ENCODE measurements at regions of chr12 and their contacts with region 1.

Region 1: GRCh38 chr12:101424620-101425019 is 17.0 kb upstream of the ARL1 start:
- DNase-seq: no peak
- ATAC-seq: no peak
- H3K4me3 ChIP-seq: no peak overlapping the region
- H3K27ac ChIP-seq: no peak overlapping the region
- H3K4me1 ChIP-seq: no peaks in the 10 kb centered on the region
- H3K27me3 ChIP-seq: no peaks in the 10 kb centered on the region
- CTCF ChIP-seq: no peak
- POLR2A ChIP-seq: no peak
- RAD21 ChIP-seq: no peak

Region 2: DNA sequence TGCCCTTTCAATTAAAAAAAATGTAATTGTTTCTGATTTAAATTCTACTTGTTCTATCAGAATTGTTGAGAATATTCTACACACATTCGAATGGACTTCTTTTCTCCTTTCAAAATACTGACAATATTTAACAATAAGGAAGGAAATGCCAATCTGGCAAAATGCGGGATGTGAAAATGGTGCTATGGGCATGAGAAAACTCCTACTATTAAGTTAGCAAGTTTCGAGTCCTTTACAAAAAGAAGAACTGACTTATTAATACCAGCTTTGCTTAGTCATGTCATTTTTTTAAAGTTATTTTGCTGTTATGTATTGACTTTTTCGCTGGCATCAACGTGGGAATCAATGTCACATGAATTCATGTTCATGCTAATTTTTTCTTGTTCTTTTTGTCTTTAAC is 14.6 kb after region 1 on chr12:
- CTCF ChIA-PET with region 1: no interaction called
- POLR2A ChIA-PET with region 1: no interaction called
- RAD21 ChIA-PET with region 1: no interaction called
- intact Hi-C with region 1: no loop called
- DNase-seq: no peak
- ATAC-seq: no peak
- H3K4me3 ChIP-seq: no peak overlapping the region
- H3K27ac ChIP-seq: no peak overlapping the region
- H3K4me1 ChIP-seq: no peaks in the 10 kb centered on the region
- H3K27me3 ChIP-seq: no peaks in the 10 kb centered on the region
- CTCF ChIP-seq: no peak
- POLR2A ChIP-seq: no peak
- RAD21 ChIP-seq: no peak

Region 3: GRCh38 chr12:101485021-101485420 is 60.4 kb after region 1 on chr12:
- CTCF ChIA-PET with region 1: no interaction called
- POLR2A ChIA-PET with region 1: no interaction called
- RAD21 ChIA-PET with region 1: no interaction called
- intact Hi-C with region 1: loop called (anchors 5 kb)
- DNase-seq: no peak
- ATAC-seq: no peak
- H3K4me3 ChIP-seq: no peak overlapping the region
- H3K27ac ChIP-seq: no peak overlapping the region
- H3K4me1 ChIP-seq: no peaks in the 10 kb centered on the region
- H3K27me3 ChIP-seq: no peaks in the 10 kb centered on the region
- CTCF ChIP-seq: no peak
- POLR2A ChIP-seq: no peak
- RAD21 ChIP-seq: no peak

Measured in HCT116 (cell line).